HEK293 (cell line): ENCODE measurements at regions of chr5 and their contacts with region 1.

Region 1: DNA sequence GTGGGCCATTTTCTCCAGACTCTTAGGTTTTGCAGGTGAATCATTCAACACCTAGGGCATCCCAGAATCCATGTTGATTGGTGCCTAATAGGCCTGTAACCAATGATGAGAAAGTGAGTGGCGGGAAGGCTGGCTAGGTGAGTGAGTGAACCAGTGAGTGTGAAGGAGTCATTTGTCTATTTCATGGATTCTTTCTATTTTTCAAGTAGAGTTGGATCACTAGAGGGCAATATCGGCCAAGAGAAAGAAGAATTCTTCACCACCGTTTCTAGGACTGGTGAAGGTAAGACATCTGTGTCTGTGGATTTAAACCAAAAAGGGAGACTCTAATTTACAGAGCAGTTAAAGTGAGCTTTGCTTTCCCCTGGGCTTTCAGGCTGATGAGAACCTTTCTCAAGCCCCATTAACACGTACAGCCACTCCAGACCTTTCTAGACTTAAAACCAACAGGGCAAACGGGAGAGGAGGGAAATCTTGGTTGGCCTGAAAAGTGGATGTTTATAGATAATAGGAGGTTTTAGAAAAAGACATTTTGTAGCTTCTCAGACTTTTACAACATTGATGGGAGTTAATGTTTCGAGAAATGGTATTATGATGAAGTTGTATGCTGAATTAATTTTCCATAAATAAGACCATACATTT is 114.3 kb upstream of the IL12B start:
- H3K4me3 ChIP-seq: no peak overlapping the region
- H3K27ac ChIP-seq: no peak overlapping the region
- H3K4me1 ChIP-seq: peaks cover 11% of the 10 kb centered on the region
- CTCF ChIP-seq: peak; percentile 66; the same call in 1 of the 2 replicates

Region 2: DNA sequence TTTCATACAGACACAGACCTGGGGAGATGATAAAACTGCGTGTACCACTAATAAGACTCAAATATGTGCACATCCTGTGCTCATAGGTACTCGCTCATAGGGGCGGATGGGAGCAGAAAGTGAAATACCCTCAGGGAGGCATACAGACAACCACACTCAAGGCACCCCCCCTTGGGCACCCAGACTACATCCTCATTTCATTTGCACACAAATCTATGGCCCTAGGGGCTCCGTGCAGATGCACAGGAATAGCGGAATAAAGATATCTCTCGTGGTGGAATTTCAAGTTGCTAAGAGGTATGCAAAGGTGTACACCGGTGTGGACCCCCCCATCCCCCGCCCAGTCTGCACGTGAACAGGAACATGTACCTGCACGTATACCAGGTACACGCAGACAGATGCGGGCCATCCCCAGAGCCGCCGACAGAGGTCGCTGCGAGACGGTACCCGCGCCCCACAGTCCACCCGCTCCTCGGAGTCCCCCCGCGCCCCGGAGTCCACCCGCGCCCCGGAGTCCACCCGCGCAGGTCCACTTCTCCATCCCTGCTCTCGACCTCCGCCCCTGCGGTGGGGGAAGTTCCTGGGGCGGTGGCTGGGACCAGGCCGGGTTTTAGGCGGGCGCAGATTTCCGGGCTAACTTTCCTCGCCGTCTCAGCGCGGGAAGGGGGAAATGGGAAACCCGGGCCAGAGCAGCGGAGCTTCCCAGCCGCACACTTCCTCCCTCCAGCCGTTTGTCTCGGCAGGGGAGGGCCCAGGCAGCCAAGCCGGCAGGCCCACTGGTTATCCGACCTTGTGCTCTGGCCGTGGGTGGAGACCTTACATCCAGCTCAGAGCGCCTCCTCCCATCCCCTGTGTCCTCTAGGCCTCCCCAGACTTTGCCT is 113.2 kb before region 1 on chr5:
- CTCF ChIA-PET with region 1: interaction called, 12 read pairs
- POLR2A ChIA-PET with region 1: interaction called, 3 read pairs
- H3K4me3 ChIP-seq: peak overlapping the region; percentile 63
- H3K27ac ChIP-seq: peak overlapping the region; percentile 70
- H3K4me1 ChIP-seq: peaks cover 3% of the 10 kb centered on the region; the same call in 1 of the 2 replicates
- CTCF ChIP-seq: peak; percentile 86

Region 3: GRCh38 chr5:159430361-159431012 is 14.1 kb before region 1 on chr5:
- CTCF ChIA-PET with region 1: interaction called, 12 read pairs
- POLR2A ChIA-PET with region 1: no interaction called
- H3K4me3 ChIP-seq: no peak overlapping the region
- H3K27ac ChIP-seq: no peak overlapping the region
- H3K4me1 ChIP-seq: no peaks in the 10 kb centered on the region
- CTCF ChIP-seq: no peak

Region 4: DNA sequence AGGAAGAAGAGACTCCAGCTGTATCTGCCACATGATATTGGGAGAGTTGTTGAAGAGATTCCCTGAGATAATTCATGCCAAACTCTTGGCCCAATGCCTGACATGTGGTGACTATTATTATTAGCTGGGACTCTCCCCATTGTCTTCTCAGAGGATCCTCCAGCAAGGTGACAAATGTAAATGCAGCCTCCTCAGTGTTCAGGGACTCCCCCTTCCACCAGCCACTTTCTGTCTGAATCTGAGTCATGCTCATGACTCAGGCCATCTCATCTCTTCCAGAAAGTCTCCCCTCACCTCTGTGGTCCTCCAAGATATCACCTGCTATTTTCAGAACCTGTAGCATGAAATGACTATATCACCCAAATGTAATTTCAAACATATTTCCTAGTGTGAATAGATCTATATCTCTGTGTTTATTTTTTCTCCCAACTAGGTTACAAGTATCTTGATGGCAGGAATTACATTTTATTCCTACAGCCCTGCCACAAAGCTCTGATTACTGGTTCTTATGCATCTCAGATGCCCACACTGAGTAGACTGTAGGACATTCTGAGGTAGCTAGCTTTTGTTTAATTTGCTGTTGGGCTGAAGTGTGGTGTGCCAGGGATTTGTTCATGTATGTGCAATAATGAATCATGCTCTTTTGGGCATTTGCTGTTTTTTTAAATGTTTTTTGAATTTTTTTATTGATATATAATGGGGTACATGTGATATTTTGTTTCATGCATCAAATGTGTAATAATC is 12.3 kb after region 1 on chr5:
- CTCF ChIA-PET with region 1: interaction called, 18 read pairs
- POLR2A ChIA-PET with region 1: no interaction called
- H3K4me3 ChIP-seq: no peak overlapping the region
- H3K27ac ChIP-seq: no peak overlapping the region
- H3K4me1 ChIP-seq: peaks cover 9% of the 10 kb centered on the region; the same call in 1 of the 2 replicates
- CTCF ChIP-seq: no peak

Region 5: GRCh38 chr5:159915904-159916840 is 471.6 kb after region 1 on chr5 and contains the start of gene ADRA1B:
- CTCF ChIA-PET with region 1: interaction called, 18 read pairs
- POLR2A ChIA-PET with region 1: no interaction called
- H3K4me3 ChIP-seq: peak within 1 kb of the TSS; percentile 41
- H3K27ac ChIP-seq: peak within 1 kb of the TSS; percentile 7; the same call in 1 of the 2 replicates
- H3K4me1 ChIP-seq: no peaks in the 10 kb centered on the region; the same call in 1 of the 2 replicates
- CTCF ChIP-seq: peak; percentile 31; the same call in 1 of the 2 replicates